Activated B cell treated with CpG ODN at 0.5 μM for 24 hours (primary cell): ENCODE measurements at regions of chr9 and their contacts with region 1.

Region 1: DNA sequence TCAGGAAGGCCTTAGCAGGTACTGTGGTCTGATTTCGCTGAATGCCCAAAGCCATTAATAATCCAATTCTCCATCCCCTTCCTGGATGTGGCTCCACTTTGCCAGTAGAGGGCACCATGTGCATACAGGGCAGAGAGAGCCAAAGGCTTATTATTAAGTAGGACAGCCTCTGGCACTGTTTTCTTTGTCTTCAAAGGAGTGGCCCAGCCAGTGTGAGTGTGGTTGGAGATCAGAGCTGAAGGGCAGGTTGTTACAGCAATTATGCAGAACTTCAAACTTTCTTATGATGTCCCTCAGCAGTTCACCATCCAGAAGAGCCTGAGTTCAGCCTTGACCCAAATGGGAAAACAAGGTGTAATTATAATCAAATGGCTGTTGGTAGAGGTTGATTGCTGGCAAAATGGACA is 38.6 kb upstream of the CEMIP2 start:
- DNase-seq: no peak
- ATAC-seq: peak; percentile 96
- H3K4me3 Mint-ChIP-seq: no peak overlapping the region
- H3K27ac Mint-ChIP-seq: peak overlapping the region; percentile 57
- H3K4me1 Mint-ChIP-seq: peaks cover 16% of the 10 kb centered on the region
- H3K27me3 Mint-ChIP-seq: no peaks in the 10 kb centered on the region
- CTCF ChIP-seq: peak; percentile 21

Region 2: GRCh38 chr9:71783120-71783530 is 23.8 kb before region 1 on chr9:
- CTCF ChIA-PET with region 1: interaction called, 44 read pairs
- POLR2A ChIA-PET with region 1: interaction called, 3 read pairs
- intact Hi-C with region 1: loop called (anchors 1 kb)
- DNase-seq: peak; percentile 37
- ATAC-seq: peak; percentile 83
- H3K4me3 Mint-ChIP-seq: peak overlapping the region; percentile 68
- H3K27ac Mint-ChIP-seq: peak overlapping the region; percentile 92
- H3K4me1 Mint-ChIP-seq: peaks cover 41% of the 10 kb centered on the region
- H3K27me3 Mint-ChIP-seq: no peaks in the 10 kb centered on the region
- CTCF ChIP-seq: no peak

Region 3: DNA sequence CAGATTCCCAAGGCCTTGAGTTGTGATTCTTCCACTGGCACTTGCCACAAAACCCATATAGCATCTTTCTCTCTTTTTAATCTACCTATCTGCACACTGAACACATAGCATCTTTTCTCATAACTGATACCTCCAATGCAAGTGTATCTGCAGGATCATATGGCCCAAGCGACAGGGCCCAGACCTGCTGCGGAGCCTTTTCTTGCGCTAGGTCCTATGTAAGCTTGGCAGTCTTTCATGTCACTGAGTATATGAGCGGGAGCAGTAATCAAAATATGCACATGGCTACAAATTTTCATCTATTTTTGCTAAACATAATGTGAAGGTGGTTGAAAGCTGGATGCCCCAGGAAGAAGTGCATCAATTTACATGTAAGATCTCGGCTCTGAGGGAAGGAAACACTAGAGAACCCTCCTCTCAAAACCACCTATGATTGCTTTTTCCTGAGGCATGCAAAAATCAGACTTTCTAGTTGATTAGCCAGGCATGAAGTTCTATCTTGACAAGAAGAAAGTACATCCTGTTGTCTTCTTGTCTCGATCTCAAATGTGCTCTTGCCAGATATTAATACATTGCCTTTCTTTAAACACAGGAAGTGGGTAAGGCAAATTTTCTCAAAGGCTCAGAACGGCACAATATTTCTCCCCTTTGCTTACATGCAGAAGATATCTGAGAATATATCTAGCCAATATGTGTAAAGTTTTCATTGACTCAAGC is 11.6 kb before region 1 on chr9:
- CTCF ChIA-PET with region 1: interaction called, 27 read pairs
- POLR2A ChIA-PET with region 1: interaction called, 3 read pairs
- intact Hi-C with region 1: loop called (anchors 1 kb)
- DNase-seq: no peak
- ATAC-seq: peak; percentile 84
- H3K4me3 Mint-ChIP-seq: peak overlapping the region; percentile 67
- H3K27ac Mint-ChIP-seq: peak overlapping the region; percentile 87
- H3K4me1 Mint-ChIP-seq: peaks cover 79% of the 10 kb centered on the region
- H3K27me3 Mint-ChIP-seq: no peaks in the 10 kb centered on the region
- CTCF ChIP-seq: no peak

Region 4: DNA sequence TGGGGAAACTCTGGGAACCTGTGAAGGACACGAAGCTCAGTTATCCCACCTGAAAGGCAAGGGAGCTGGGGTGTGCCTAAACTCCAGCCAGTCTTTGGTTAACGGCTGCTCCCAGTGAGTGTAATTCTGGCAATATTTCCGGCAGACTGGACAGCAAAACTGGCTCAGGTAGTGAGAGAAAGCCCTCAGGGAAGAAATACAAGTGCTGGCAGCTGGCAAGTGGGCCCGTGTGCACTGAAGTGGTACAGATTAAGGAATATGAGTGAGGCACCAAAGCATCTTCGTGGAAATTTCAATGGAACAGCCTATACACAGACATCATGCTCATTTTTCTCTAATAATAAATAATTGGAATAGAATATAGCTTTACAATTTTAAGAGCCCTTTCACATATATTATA is 47.9 kb after region 1 on chr9:
- CTCF ChIA-PET with region 1: no interaction called
- POLR2A ChIA-PET with region 1: no interaction called
- intact Hi-C with region 1: no loop called
- DNase-seq: no peak
- ATAC-seq: no peak
- H3K4me3 Mint-ChIP-seq: no peak overlapping the region
- H3K27ac Mint-ChIP-seq: no peak overlapping the region
- H3K4me1 Mint-ChIP-seq: peaks cover 4% of the 10 kb centered on the region
- H3K27me3 Mint-ChIP-seq: no peaks in the 10 kb centered on the region
- CTCF ChIP-seq: no peak

Region 5: GRCh38 chr9:71975833-71976232 is 168.9 kb after region 1 on chr9:
- CTCF ChIA-PET with region 1: interaction called, 6 read pairs
- POLR2A ChIA-PET with region 1: no interaction called
- intact Hi-C with region 1: loop called (anchors 1 kb)
- DNase-seq: no peak
- ATAC-seq: no peak
- H3K4me3 Mint-ChIP-seq: no peak overlapping the region
- H3K27ac Mint-ChIP-seq: no peak overlapping the region
- H3K4me1 Mint-ChIP-seq: no peaks in the 10 kb centered on the region
- H3K27me3 Mint-ChIP-seq: no peaks in the 10 kb centered on the region
- CTCF ChIP-seq: no peak